ENCODE measurements at regions of chr3 and their contacts with region 1.

Region 1: GRCh38 chr3:102229062-102229655 is 205.7 kb upstream of the ZPLD1 start:
- DNase-seq: peak; percentile 48 to 72
- ATAC-seq: peak; percentile 70 to 88 (median 82)
- H3K4me3 ChIP-seq: no peak overlapping the region
- H3K27ac ChIP-seq: no peak overlapping the region
- H3K4me1 ChIP-seq: no peaks in the 10 kb centered on the region
- H3K27me3 ChIP-seq: no peaks in the 10 kb centered on the region
- CTCF ChIP-seq: peak; percentile 93

Region 2: GRCh38 chr3:101685870-101686412 is 543.2 kb before region 1 on chr3:
- intact Hi-C with region 1: loop called in 1 of 2 experiments (anchors 10 kb)
- DNase-seq: no peak
- ATAC-seq: peak; percentile 10 to 34 (median 17)
- H3K4me3 ChIP-seq: peak overlapping the region; percentile 78
- H3K27ac ChIP-seq: peak overlapping the region; percentile 92
- H3K4me1 ChIP-seq: peaks cover 33% of the 10 kb centered on the region
- H3K27me3 ChIP-seq: no peaks in the 10 kb centered on the region
- CTCF ChIP-seq: no peak

Region 3: DNA sequence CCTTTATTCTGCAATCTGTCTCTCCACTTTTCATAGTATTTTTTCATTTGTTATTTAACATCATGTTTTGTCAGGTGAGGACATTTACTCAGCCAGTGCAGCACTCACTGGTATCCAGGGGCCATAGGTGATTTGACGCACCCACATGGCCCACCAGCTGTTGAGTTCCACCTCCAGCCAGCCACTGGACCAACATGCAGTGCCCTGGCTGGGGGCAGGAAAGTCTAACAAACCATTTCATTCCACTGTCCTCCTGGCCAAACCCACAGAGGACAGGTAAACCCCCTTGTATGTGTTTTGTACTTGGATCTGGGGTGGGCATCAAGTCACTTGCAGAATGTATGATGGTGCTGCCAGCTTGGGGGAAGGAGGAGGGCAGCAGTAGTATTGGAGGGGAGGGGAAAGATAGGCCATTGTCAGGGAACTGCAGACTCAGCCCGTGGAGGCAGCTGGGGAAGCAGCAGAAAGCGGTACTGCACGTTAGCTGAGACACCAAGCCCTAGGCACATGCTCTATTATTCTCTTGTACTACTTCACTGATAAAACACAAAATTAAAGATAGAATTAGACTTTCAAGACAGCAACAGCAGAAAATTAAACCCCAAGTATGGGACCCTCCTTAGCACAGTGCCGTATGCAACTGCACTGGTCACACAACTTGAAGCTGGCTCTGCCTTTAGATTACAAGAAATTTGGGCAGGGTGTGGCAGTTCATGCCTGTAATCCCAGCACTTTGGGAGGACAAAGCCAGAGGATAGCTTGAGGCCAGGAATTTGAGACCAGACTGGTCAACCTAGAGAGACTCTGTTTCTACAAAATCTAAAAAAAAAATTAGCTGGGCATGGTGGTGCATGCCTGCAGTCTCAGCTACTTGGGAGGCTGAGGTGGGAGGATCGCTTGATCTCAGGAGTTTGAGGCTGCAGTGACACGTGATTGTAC is 527.2 kb before region 1 on chr3:
- intact Hi-C with region 1: no loop called
- DNase-seq: no peak
- ATAC-seq: no peak
- H3K4me3 ChIP-seq: no peak overlapping the region
- H3K27ac ChIP-seq: no peak overlapping the region
- H3K4me1 ChIP-seq: no peaks in the 10 kb centered on the region
- H3K27me3 ChIP-seq: no peaks in the 10 kb centered on the region
- CTCF ChIP-seq: no peak

Region 4: GRCh38 chr3:101803173-101803782 is 425.9 kb before region 1 on chr3:
- intact Hi-C with region 1: loop called in 1 of 2 experiments (anchors 2 kb)
- DNase-seq: no peak
- ATAC-seq: peak; percentile 84 to 96 (median 90)
- H3K4me3 ChIP-seq: no peak overlapping the region
- H3K27ac ChIP-seq: no peak overlapping the region
- H3K4me1 ChIP-seq: no peaks in the 10 kb centered on the region
- H3K27me3 ChIP-seq: no peaks in the 10 kb centered on the region
- CTCF ChIP-seq: peak; percentile 84

Region 5: GRCh38 chr3:101809178-101810021 is 419.8 kb before region 1 on chr3:
- intact Hi-C with region 1: loop called (anchors 2 to 5 kb)
- DNase-seq: no peak
- ATAC-seq: peak in 2 of 4 donors; percentile 68 to 75
- H3K4me3 ChIP-seq: no peak overlapping the region
- H3K27ac ChIP-seq: no peak overlapping the region
- H3K4me1 ChIP-seq: peaks cover 10% of the 10 kb centered on the region
- H3K27me3 ChIP-seq: no peaks in the 10 kb centered on the region
- CTCF ChIP-seq: peak; percentile 66

Region 6: DNA sequence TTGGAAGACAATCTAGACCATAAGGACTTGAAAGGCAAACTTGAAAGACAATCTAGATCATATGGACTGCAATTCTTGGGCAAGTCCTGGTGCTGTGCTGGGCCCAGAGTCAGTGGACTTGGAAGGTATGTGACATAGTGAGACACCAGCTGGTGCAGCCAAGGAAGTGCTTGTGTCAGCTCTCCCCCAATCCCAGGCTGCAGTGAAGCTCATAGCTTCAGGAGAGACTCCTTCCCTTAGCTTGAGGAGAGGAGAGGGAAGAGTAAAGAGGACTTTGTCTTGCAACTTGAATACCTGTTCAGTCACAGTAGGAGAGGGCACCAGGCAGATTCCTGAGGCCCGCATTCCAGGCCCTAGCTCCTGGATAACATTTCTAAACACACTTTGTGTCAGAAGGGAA is 78.3 kb after region 1 on chr3:
- intact Hi-C with region 1: no loop called
- DNase-seq: no peak
- ATAC-seq: no peak
- H3K4me3 ChIP-seq: no peak overlapping the region
- H3K27ac ChIP-seq: no peak overlapping the region
- H3K4me1 ChIP-seq: no peaks in the 10 kb centered on the region
- H3K27me3 ChIP-seq: no peaks in the 10 kb centered on the region
- CTCF ChIP-seq: no peak

Region 7: GRCh38 chr3:102536456-102536855 is 307.3 kb after region 1 on chr3:
- intact Hi-C with region 1: loop called (anchors 1 to 5 kb)
- DNase-seq: no peak
- ATAC-seq: peak in 2 of 4 donors; percentile 40 to 75
- H3K4me3 ChIP-seq: no peak overlapping the region
- H3K27ac ChIP-seq: no peak overlapping the region
- H3K4me1 ChIP-seq: no peaks in the 10 kb centered on the region
- H3K27me3 ChIP-seq: peaks cover 0 to 7% (median 0%) of the 10 kb centered on the region in 3 donors
- CTCF ChIP-seq: peak; percentile 44